Activated CD4-positive, alpha-beta T cell treated with anti-CD3 and anti-CD28 coated beads, Interleukin-2, amount 10 ng/mL, durations not matched to agents 24 days and 14 days (primary cell): ENCODE measurements at regions of chr3 and their contacts with region 1.

Region 1: GRCh38 chr3:123960781-123961507 is at the start of gene CCDC14:
- DNase-seq: peak; percentile 93
- H3K4me3 Mint-ChIP-seq: peak within 1 kb of the TSS; percentile 96
- H3K27ac Mint-ChIP-seq: peak within 1 kb of the TSS; percentile 93
- H3K4me1 Mint-ChIP-seq: peaks cover 19% of the 10 kb centered on the region
- H3K27me3 Mint-ChIP-seq: peaks cover 25% of the 10 kb centered on the region
- total RNA-seq, gene CCDC14: 43.1 and 46.2 TPM in 2 replicates

Region 2: GRCh38 chr3:123584988-123585937 is 375.7 kb before region 1 on chr3 and contains the start of gene HACD2:
- intact Hi-C with region 1: loop called (anchors 1 kb)
- DNase-seq: peak; percentile 98
- H3K4me3 Mint-ChIP-seq: no peak within 1 kb of the TSS
- H3K27ac Mint-ChIP-seq: peak within 1 kb of the TSS; percentile 74
- H3K4me1 Mint-ChIP-seq: peaks cover 16% of the 10 kb centered on the region
- H3K27me3 Mint-ChIP-seq: no peaks in the 10 kb centered on the region
- total RNA-seq, gene HACD2: 28.4 and 31.8 TPM in 2 replicates

Region 3: GRCh38 chr3:123834631-123835030 is 126.3 kb before region 1 on chr3:
- intact Hi-C with region 1: no loop called
- DNase-seq: no peak
- H3K4me3 Mint-ChIP-seq: no peak overlapping the region
- H3K27ac Mint-ChIP-seq: no peak overlapping the region
- H3K4me1 Mint-ChIP-seq: no peaks in the 10 kb centered on the region
- H3K27me3 Mint-ChIP-seq: peaks cover 8% of the 10 kb centered on the region

Region 4: GRCh38 chr3:123884203-123884831 is 76.6 kb before region 1 on chr3 and contains the start of gene MYLK:
- intact Hi-C with region 1: loop called (anchors 1 kb)
- DNase-seq: peak; percentile 87
- H3K4me3 Mint-ChIP-seq: peak within 1 kb of the TSS; percentile 83
- H3K27ac Mint-ChIP-seq: no peak within 1 kb of the TSS
- H3K4me1 Mint-ChIP-seq: peaks cover 16% of the 10 kb centered on the region
- H3K27me3 Mint-ChIP-seq: peaks cover 58% of the 10 kb centered on the region
- total RNA-seq, gene MYLK: 0.21 and 0.26 TPM in 2 replicates

Region 5: DNA sequence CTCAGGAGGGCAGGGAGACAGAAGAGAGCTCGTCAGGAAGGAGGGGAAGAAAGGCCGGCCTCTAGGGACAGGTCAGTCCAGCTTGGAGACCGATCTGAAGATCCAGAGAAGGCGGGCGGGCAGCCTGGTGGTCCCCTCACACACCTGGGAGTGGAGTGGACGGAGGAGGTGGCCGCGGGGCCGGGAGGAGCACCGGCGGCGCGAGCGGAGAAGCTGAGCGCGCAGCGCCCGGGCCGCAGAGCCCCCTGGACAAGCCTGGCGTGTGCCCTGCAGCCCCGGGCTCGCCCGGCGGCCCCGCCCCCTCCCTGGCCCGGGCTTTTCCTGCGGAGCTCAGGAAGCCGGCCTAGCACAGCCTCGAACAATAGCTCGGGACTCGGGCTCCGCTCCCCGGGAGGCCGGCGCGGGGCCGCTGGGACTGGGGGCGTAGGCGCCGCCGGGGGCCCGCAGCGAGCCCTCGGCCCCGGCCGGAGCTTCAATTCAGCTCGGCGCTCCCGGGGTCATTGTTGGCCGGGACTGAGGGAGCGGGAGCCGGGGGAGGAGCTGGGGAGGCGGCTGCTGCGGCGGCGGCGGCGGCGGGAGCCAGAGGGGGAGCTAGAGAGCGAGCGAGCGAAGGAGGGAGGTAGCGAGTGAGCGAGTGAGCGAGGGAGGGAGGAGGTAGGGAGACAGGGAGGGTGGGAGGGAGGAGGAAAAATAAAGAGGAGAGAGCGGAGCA is 71.9 kb after region 1 on chr3:
- intact Hi-C with region 1: loop called (anchors 5 kb)
- DNase-seq: peak; percentile 90
- H3K4me3 Mint-ChIP-seq: peak overlapping the region; percentile 80
- H3K27ac Mint-ChIP-seq: peak overlapping the region; percentile 70
- H3K4me1 Mint-ChIP-seq: peaks cover 9% of the 10 kb centered on the region
- H3K27me3 Mint-ChIP-seq: peaks cover 56% of the 10 kb centered on the region